ENCODE measurements at regions of chr4 and their contacts with region 1.

Region 1: DNA sequence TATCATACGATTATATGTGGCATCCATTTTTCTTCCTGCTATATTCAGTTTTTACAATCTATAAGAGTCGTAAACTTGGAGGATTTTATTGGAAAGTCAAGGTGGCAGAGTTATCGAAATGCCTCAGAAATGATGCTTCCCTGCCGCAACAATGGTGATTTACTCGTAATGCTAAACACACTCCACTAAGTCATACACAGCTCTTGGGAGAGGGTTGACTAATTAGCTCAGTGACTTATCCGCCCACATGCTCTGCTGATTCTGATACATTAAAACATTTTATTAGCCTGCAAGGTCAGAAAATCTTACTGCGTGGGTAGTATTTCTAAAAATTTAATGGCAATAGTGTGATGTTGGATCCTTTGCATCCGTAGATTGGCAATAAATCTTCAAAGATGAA is 420.1 kb downstream of the ARAP2 start:
- DNase-seq: no peak
- H3K4me3 Mint-ChIP-seq: no peak overlapping the region
- H3K27ac Mint-ChIP-seq: no peak overlapping the region
- H3K4me1 Mint-ChIP-seq: no peaks in the 10 kb centered on the region
- H3K27me3 Mint-ChIP-seq: no peaks in the 10 kb centered on the region
- CTCF ChIP-seq: no peak

Region 2: GRCh38 chr4:35757836-35758235 is 66.4 kb before region 1 on chr4:
- CTCF ChIA-PET with region 1: interaction called, 10 read pairs
- POLR2A ChIA-PET with region 1: no interaction called
- intact Hi-C with region 1: no loop called
- DNase-seq: no peak
- H3K4me3 Mint-ChIP-seq: no peak overlapping the region
- H3K27ac Mint-ChIP-seq: no peak overlapping the region
- H3K4me1 Mint-ChIP-seq: no peaks in the 10 kb centered on the region
- H3K27me3 Mint-ChIP-seq: no peaks in the 10 kb centered on the region
- CTCF ChIP-seq: no peak